Activated T-helper 1 cell treated with anti-CD3 and anti-CD28 coated beads, Interleukin-12 subunit alpha, Interleukin-12 subunit beta, Interleukin-2, Interleukin-4 antibody, amounts not matched to agents 30 ng/mL and 10 ng/mL and 1 ng/mL, durations not matched to agents 14 hours and 24 hours and 36 hours (primary cell): ENCODE measurements at regions of chr3 and their contacts with region 1.

Region 1: GRCh38 chr3:18988614-18989229 is 159.6 kb upstream of the KCNH8 start:
- DNase-seq: no peak
- H3K4me3 Mint-ChIP-seq: peak overlapping the region; percentile 85
- H3K27ac Mint-ChIP-seq: peak overlapping the region; percentile 46
- H3K4me1 Mint-ChIP-seq: peaks cover 25% of the 10 kb centered on the region
- H3K27me3 Mint-ChIP-seq: peaks cover 12% of the 10 kb centered on the region

Region 2: GRCh38 chr3:17645072-17645698 is 1343.5 kb before region 1 on chr3:
- intact Hi-C with region 1: loop called (anchors 10 kb)
- DNase-seq: no peak
- H3K4me3 Mint-ChIP-seq: no peak overlapping the region
- H3K27ac Mint-ChIP-seq: no peak overlapping the region
- H3K4me1 Mint-ChIP-seq: no peaks in the 10 kb centered on the region
- H3K27me3 Mint-ChIP-seq: no peaks in the 10 kb centered on the region

Region 3: DNA sequence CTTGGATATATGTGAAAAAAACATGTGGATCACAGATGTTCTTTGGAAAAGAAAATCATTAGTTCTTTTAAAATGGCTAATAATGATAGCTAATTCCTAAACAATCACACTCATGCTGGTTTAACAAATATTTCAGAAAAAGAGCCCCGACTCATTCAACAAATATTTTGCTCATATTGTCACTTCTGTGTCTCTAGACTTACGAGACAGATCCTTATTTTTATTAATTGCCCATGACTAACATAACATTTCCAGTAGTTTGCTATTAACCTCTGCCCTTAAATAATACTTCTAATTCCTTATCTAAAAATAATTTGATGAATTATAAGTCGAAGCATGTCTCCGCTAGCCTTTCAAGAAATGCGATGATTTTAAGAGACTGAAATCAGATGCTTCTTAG is 634.0 kb before region 1 on chr3:
- intact Hi-C with region 1: loop called (anchors 5 kb)
- DNase-seq: no peak
- H3K4me3 Mint-ChIP-seq: no peak overlapping the region
- H3K27ac Mint-ChIP-seq: no peak overlapping the region
- H3K4me1 Mint-ChIP-seq: peaks cover 50% of the 10 kb centered on the region
- H3K27me3 Mint-ChIP-seq: no peaks in the 10 kb centered on the region

Region 4: GRCh38 chr3:18444595-18445400 is 543.9 kb before region 1 on chr3:
- intact Hi-C with region 1: loop called (anchors 1 kb)
- DNase-seq: peak; percentile 75
- H3K4me3 Mint-ChIP-seq: peak overlapping the region; percentile 99
- H3K27ac Mint-ChIP-seq: peak overlapping the region; percentile 97
- H3K4me1 Mint-ChIP-seq: peaks cover 54% of the 10 kb centered on the region
- H3K27me3 Mint-ChIP-seq: peaks cover 1% of the 10 kb centered on the region

Region 5: DNA sequence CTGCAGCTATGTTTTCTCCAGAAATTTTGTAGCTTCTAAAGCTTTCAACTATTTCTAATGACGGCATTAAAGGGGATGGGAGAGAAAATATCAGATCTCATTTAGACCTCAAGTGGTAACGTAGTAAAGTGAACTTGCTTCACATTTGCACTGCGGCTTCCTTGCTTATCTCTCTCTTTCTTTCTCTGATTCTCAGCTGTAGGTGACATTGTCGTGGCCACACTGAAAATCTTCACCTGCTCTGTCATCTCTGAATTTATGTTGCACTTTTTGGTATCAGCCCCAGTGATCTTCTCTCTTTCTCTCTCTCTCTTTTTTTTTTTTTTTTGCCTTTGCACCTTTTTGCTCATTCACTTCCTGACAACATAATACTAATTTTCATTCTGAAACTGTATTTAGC is 309.5 kb before region 1 on chr3:
- intact Hi-C with region 1: loop called (anchors 2 kb)
- DNase-seq: peak; percentile 62
- H3K4me3 Mint-ChIP-seq: peak overlapping the region; percentile 19
- H3K27ac Mint-ChIP-seq: peak overlapping the region; percentile 77
- H3K4me1 Mint-ChIP-seq: peaks cover 89% of the 10 kb centered on the region
- H3K27me3 Mint-ChIP-seq: no peaks in the 10 kb centered on the region

Region 6: DNA sequence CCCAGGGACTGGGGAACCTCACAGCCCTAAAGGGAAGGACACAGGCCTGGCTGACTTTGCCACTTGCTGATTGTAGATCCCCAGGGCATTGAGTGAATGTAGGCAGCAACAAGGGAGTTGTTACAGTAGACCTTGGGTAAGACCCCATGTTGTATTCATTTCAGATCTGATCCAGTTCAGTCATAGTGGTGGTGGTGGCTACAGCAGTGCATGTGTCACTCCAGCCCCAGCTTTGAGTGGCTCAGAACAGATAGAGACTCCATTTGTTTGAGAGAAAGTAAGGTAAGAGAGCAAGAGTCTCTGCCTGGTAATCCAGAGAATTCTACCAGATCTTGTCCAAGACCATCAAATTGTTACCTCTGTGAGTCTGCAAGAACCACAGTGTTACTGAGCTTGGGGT is 284.9 kb before region 1 on chr3:
- intact Hi-C with region 1: no loop called
- DNase-seq: no peak
- H3K4me3 Mint-ChIP-seq: no peak overlapping the region
- H3K27ac Mint-ChIP-seq: no peak overlapping the region
- H3K4me1 Mint-ChIP-seq: peaks cover 7% of the 10 kb centered on the region
- H3K27me3 Mint-ChIP-seq: no peaks in the 10 kb centered on the region

Region 7: DNA sequence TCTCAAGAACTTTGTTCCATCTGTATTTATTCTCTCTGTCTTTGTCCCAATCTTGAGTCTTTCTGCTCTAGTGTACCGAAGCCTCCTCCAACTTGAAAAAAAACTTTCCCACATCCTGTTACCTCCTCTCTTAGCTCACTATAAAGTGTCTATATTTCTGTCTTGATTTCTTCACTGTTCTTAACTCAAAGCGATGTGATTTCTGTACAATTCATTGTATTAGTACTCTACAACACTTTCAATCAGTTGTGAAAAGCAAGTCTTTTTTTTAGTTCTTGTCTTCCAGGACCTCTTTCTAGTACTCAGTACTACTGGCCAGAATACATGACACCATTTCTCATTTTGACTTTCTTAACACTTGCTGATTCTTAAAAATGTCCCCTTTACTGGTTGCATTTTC is 210.1 kb before region 1 on chr3:
- intact Hi-C with region 1: no loop called
- DNase-seq: no peak
- H3K4me3 Mint-ChIP-seq: peak overlapping the region; percentile 64
- H3K27ac Mint-ChIP-seq: peak overlapping the region; percentile 89
- H3K4me1 Mint-ChIP-seq: peaks cover 49% of the 10 kb centered on the region
- H3K27me3 Mint-ChIP-seq: peaks cover 2% of the 10 kb centered on the region

Region 8: GRCh38 chr3:18847583-18848197 is 141.0 kb before region 1 on chr3:
- intact Hi-C with region 1: loop called (anchors 1 kb)
- DNase-seq: no peak
- H3K4me3 Mint-ChIP-seq: no peak overlapping the region
- H3K27ac Mint-ChIP-seq: no peak overlapping the region
- H3K4me1 Mint-ChIP-seq: peaks cover 22% of the 10 kb centered on the region
- H3K27me3 Mint-ChIP-seq: peaks cover 7% of the 10 kb centered on the region

Region 9: GRCh38 chr3:19046440-19046839 is 57.7 kb after region 1 on chr3:
- intact Hi-C with region 1: no loop called
- DNase-seq: no peak
- H3K4me3 Mint-ChIP-seq: no peak overlapping the region
- H3K27ac Mint-ChIP-seq: no peak overlapping the region
- H3K4me1 Mint-ChIP-seq: no peaks in the 10 kb centered on the region
- H3K27me3 Mint-ChIP-seq: no peaks in the 10 kb centered on the region